ENCODE measurements at regions of chr2 and their contacts with region 1.

Region 1: GRCh38 chr2:121356058-121356640 is 71.1 kb upstream of the TFCP2L1 start:
- DNase-seq: no peak
- ATAC-seq: no peak
- H3K4me3 Mint-ChIP-seq: no peak overlapping the region
- H3K27ac Mint-ChIP-seq: no peak overlapping the region
- H3K4me1 Mint-ChIP-seq: no peaks in the 10 kb centered on the region
- H3K27me3 Mint-ChIP-seq: no peaks in the 10 kb centered on the region
- CTCF ChIP-seq: no peak

Region 2: DNA sequence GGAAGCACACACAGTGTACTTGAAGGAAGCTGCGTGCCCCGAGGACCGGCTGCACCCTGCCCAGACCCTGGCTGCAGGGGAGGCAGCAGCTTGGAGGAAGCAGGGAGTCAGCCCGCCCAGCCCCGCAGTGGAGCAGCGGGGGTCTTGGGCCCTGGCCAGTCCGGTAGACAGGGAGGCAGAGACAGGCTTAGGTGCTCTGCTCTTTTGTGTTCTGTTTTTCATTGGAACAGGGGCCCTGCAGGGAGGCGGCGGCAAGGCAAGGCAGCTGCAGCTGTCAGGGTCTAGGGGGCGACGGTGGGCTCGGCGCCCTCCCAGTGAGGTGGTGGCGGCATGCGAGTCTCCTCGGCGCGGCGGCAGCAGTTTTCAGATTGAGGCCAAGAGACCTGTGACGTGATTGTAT is 17.9 kb before region 1 on chr2:
- CTCF ChIA-PET with region 1: no interaction called
- POLR2A ChIA-PET with region 1: no interaction called
- intact Hi-C with region 1: no loop called
- DNase-seq: no peak
- ATAC-seq: no peak
- H3K4me3 Mint-ChIP-seq: no peak overlapping the region
- H3K27ac Mint-ChIP-seq: no peak overlapping the region
- H3K4me1 Mint-ChIP-seq: no peaks in the 10 kb centered on the region
- H3K27me3 Mint-ChIP-seq: no peaks in the 10 kb centered on the region
- CTCF ChIP-seq: no peak

Region 3: DNA sequence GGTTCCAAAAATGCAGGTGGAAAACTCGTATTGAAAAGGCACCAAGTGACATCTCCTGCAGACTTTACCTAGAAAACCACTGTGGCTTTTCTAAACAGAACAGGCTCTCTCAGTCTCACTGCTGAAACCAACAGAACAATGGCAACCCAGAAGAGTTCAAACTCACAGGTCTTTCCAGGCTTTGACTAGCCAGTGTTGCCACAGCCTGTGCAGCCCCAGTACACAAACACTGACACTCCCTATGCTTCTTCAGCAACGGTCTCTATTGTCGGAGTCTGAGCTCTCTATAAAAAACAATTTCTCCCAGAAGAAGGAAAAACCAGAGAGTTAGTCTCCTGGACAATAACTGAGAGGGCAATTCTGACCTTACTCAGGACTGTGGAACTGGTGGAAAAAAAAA is 86.7 kb after region 1 on chr2:
- CTCF ChIA-PET with region 1: no interaction called
- POLR2A ChIA-PET with region 1: no interaction called
- intact Hi-C with region 1: no loop called
- DNase-seq: no peak
- ATAC-seq: no peak
- H3K4me3 Mint-ChIP-seq: no peak overlapping the region
- H3K27ac Mint-ChIP-seq: no peak overlapping the region
- H3K4me1 Mint-ChIP-seq: no peaks in the 10 kb centered on the region
- H3K27me3 Mint-ChIP-seq: no peaks in the 10 kb centered on the region
- CTCF ChIP-seq: no peak

Region 4: GRCh38 chr2:121555008-121555407 is 198.9 kb after region 1 on chr2:
- CTCF ChIA-PET with region 1: no interaction called
- POLR2A ChIA-PET with region 1: interaction called, 10 read pairs
- intact Hi-C with region 1: no loop called
- DNase-seq: no peak
- ATAC-seq: no peak
- H3K4me3 Mint-ChIP-seq: no peak overlapping the region
- H3K27ac Mint-ChIP-seq: no peak overlapping the region
- H3K4me1 Mint-ChIP-seq: peaks cover 50% of the 10 kb centered on the region
- H3K27me3 Mint-ChIP-seq: no peaks in the 10 kb centered on the region
- CTCF ChIP-seq: no peak

Measured in activated B cell treated with CpG ODN at 0.5 μM for 24 hours (primary cell).